ENCODE measurements at regions of chr9 and their contacts with region 1.

Region 1: GRCh38 chr9:72856972-72857623 is 95.8 kb downstream of the ALDH1A1 start:
- DNase-seq: no peak
- H3K4me3 Mint-ChIP-seq: no peak overlapping the region
- H3K27ac Mint-ChIP-seq: no peak overlapping the region
- H3K4me1 Mint-ChIP-seq: no peaks in the 10 kb centered on the region
- H3K27me3 Mint-ChIP-seq: no peaks in the 10 kb centered on the region

Region 2: GRCh38 chr9:72680593-72681282 is 176.4 kb before region 1 on chr9:
- intact Hi-C with region 1: no loop called
- DNase-seq: no peak
- H3K4me3 Mint-ChIP-seq: no peak overlapping the region
- H3K27ac Mint-ChIP-seq: no peak overlapping the region
- H3K4me1 Mint-ChIP-seq: no peaks in the 10 kb centered on the region
- H3K27me3 Mint-ChIP-seq: peaks cover 20% of the 10 kb centered on the region

Region 3: GRCh38 chr9:73023025-73023541 is 166.0 kb after region 1 on chr9:
- intact Hi-C with region 1: loop called (anchors 5 kb)
- DNase-seq: peak; percentile 10
- H3K4me3 Mint-ChIP-seq: no peak overlapping the region
- H3K27ac Mint-ChIP-seq: no peak overlapping the region
- H3K4me1 Mint-ChIP-seq: peaks cover 9% of the 10 kb centered on the region
- H3K27me3 Mint-ChIP-seq: peaks cover 15% of the 10 kb centered on the region

Region 4: GRCh38 chr9:73081979-73082657 is 225.0 kb after region 1 on chr9:
- intact Hi-C with region 1: loop called (anchors 1 kb)
- DNase-seq: no peak
- H3K4me3 Mint-ChIP-seq: no peak overlapping the region
- H3K27ac Mint-ChIP-seq: no peak overlapping the region
- H3K4me1 Mint-ChIP-seq: no peaks in the 10 kb centered on the region
- H3K27me3 Mint-ChIP-seq: peaks cover 16% of the 10 kb centered on the region